Activated T-helper 1 cell treated with anti-CD3 and anti-CD28 coated beads, Interleukin-12 subunit alpha, Interleukin-12 subunit beta, Interleukin-2, Interleukin-4 antibody, amounts not matched to agents 30 ng/mL and 10 ng/mL and 1 ng/mL, durations not matched to agents 14 hours and 24 hours and 36 hours (primary cell): ENCODE measurements at regions of chr10 and their contacts with region 1.

Region 1: GRCh38 chr10:60208676-60209269 is 180.9 kb downstream of the ANK3 start:
- DNase-seq: no peak
- H3K4me3 Mint-ChIP-seq: no peak overlapping the region
- H3K27ac Mint-ChIP-seq: no peak overlapping the region
- H3K4me1 Mint-ChIP-seq: peaks cover 36% of the 10 kb centered on the region
- H3K27me3 Mint-ChIP-seq: no peaks in the 10 kb centered on the region

Region 2: DNA sequence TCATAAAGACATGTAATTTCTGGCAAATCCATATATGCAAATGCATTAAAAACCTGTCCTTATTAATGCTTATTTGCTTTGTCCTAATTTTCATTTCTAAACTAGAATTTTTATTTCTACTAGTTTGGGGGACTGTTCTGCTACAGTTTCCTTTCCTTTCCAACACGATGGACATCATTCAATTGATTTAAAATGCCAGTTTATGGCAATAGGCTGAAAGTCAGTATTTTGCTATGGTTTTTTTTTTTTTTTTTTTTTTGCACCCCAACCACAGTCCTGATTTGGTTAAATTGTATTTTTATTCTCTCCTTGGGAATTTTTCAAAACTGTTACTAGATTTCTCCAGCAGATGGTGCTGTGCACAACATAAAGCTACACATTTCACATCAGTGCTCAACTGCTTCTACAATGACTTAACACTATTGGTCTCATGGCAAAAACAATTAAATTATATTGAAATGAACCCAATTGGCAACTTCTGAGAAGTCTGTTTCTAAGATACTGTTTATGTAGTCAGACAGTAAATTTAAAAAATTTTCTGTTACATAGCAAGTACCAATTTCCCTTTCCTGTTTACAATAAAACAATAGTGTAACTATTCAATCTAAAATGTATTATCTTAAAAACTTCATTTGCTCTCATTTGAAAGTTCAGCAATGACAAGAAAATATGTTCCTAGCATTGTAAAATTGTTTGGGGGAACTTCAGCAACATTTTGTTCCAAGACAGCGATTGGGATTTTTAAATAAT is 108.6 kb before region 1 on chr10:
- intact Hi-C with region 1: loop called (anchors 1 kb)
- DNase-seq: no peak
- H3K4me3 Mint-ChIP-seq: no peak overlapping the region
- H3K27ac Mint-ChIP-seq: no peak overlapping the region
- H3K4me1 Mint-ChIP-seq: no peaks in the 10 kb centered on the region
- H3K27me3 Mint-ChIP-seq: no peaks in the 10 kb centered on the region

Region 3: GRCh38 chr10:60114765-60115586 is 93.8 kb before region 1 on chr10:
- intact Hi-C with region 1: loop called (anchors 1 kb)
- DNase-seq: no peak
- H3K4me3 Mint-ChIP-seq: no peak overlapping the region
- H3K27ac Mint-ChIP-seq: no peak overlapping the region
- H3K4me1 Mint-ChIP-seq: no peaks in the 10 kb centered on the region
- H3K27me3 Mint-ChIP-seq: no peaks in the 10 kb centered on the region

Region 4: GRCh38 chr10:60237977-60238758 is 29.4 kb after region 1 on chr10:
- intact Hi-C with region 1: loop called (anchors 2 kb)
- DNase-seq: no peak
- H3K4me3 Mint-ChIP-seq: peak overlapping the region; percentile 27
- H3K27ac Mint-ChIP-seq: peak overlapping the region; percentile 33
- H3K4me1 Mint-ChIP-seq: peaks cover 30% of the 10 kb centered on the region
- H3K27me3 Mint-ChIP-seq: no peaks in the 10 kb centered on the region

Region 5: DNA sequence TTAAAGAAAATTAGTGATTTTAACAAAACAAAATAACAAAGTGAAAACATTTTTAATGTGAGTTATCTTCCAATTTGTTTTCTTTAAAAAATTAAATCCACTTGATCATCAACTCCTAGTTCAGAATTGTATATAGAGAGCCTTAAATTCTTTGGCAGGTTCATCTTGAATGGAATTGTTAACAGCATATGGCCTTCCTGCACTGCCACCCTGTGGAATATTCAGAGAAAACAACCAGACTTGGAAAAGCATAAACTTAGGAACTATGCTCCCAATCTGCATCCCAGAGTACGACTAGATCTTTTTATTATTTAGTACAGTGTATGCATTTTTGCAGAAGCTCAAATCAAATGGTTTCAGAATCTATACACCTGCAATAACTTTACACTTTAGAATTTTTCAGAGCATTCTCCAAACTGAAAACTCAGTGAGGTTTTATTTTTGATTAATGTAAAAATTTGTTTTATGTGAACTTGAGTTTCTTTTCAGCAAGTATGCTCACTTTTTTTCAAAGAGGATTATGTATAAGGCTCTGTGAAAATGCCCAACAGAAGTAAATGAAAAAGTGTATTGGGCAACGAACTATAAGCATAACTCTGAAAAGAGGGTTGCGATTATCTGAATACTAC is 225.8 kb after region 1 on chr10:
- intact Hi-C with region 1: loop called (anchors 1 kb)
- DNase-seq: no peak
- H3K4me3 Mint-ChIP-seq: no peak overlapping the region
- H3K27ac Mint-ChIP-seq: no peak overlapping the region
- H3K4me1 Mint-ChIP-seq: no peaks in the 10 kb centered on the region
- H3K27me3 Mint-ChIP-seq: no peaks in the 10 kb centered on the region

Region 6: DNA sequence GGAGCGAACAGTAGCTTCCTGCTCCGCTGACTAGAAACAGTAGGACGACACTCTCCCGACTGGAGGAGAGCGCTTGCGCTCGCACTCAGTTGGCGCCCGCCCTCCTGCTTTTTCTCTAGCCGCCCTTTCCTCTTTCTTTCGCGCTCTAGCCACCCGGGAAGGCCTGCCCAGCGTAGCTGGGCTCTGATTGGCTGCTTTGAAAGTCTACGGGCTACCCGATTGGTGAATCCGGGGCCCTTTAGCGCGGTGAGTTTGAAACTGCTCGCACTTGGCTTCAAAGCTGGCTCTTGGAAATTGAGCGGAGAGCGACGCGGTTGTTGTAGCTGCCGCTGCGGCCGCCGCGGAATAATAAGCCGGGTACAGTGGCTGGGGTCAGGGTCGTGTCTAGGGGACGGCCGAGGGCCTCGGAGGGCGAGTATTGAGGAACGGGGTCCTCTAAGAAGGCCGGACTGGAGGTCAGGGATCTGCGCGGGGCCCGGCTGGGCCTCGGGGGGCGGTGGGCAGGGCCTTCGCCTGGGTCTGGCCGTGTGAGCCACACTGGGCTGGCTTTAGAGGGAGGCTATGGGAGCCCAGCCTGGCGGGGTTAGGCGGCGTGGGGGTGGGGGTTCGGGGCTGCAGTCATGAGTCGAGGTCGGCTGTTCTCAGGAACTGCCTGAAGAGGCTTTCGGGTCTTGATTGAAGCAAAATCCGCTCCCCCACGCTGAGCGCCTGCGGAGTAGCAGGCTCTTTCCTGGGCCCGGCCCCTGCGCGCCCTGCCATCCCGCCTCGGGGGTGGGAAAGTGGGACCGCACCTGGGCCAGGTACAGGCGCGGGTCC is 569.6 kb after region 1 on chr10 and contains the start of gene CDK1:
- intact Hi-C with region 1: loop called (anchors 10 kb)
- DNase-seq: peak; percentile 97
- H3K4me3 Mint-ChIP-seq: peak within 1 kb of the TSS; percentile 99
- H3K27ac Mint-ChIP-seq: peak within 1 kb of the TSS; percentile 97
- H3K4me1 Mint-ChIP-seq: peaks cover 35% of the 10 kb centered on the region
- H3K27me3 Mint-ChIP-seq: peaks cover 2% of the 10 kb centered on the region
- total RNA-seq, gene CDK1: 100 and 104 TPM in 2 replicates